Activated B cell treated with CpG ODN at 0.5 μM for 24 hours (primary cell): ENCODE measurements at regions of chr3 and their contacts with region 1.

Region 1: DNA sequence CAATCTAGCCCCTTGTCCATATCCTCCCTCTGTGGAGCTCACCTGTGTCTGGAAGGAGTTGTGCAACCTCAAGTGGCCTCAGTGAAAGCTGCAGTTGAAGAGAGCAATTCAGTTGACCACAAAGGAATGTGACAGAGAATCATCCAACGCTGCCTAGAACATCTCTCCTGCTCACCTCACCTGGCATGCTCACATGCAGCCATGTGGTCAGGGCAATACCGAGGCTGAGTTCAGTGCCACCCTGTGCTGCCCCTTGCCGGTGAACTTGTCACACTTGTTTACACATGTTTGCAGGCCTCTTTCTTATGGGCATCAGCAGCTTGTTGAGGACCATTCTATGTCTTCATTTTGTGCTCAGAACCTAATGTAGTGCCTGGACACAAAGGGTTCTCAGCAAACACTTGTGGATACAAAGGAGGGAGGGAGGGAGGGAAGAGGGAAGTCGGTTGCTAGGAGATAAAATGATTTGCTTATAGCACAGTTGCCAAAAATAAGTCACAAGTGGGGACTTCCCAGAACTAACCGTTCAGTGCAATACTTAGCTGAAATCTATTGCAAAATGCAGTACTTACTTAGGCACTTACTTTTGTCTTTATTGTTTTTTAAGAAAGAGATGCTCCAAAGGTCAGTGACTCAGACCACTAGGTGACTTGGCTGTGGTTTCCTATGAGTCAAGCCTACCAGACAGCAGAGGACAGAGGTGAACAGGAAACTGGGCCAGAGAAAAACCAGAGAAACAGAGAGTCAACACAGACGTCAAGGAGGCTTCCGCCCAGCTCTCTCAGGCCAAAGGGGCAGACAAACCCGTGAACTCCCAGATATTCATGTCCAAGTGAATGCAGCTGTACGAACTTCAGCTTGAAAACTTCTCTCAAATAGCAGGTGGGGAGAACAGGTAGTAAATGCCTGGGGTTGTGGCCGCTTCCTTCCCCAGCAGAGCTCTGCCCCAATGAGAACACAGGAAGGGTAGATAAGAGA is 227.8 kb upstream of the CTNNB1 start:
- DNase-seq: peak; percentile 38
- ATAC-seq: peak; percentile 80
- H3K4me3 Mint-ChIP-seq: peak overlapping the region; percentile 60
- H3K27ac Mint-ChIP-seq: peak overlapping the region; percentile 98
- H3K4me1 Mint-ChIP-seq: peaks cover 78% of the 10 kb centered on the region
- H3K27me3 Mint-ChIP-seq: no peaks in the 10 kb centered on the region
- CTCF ChIP-seq: no peak

Region 2: DNA sequence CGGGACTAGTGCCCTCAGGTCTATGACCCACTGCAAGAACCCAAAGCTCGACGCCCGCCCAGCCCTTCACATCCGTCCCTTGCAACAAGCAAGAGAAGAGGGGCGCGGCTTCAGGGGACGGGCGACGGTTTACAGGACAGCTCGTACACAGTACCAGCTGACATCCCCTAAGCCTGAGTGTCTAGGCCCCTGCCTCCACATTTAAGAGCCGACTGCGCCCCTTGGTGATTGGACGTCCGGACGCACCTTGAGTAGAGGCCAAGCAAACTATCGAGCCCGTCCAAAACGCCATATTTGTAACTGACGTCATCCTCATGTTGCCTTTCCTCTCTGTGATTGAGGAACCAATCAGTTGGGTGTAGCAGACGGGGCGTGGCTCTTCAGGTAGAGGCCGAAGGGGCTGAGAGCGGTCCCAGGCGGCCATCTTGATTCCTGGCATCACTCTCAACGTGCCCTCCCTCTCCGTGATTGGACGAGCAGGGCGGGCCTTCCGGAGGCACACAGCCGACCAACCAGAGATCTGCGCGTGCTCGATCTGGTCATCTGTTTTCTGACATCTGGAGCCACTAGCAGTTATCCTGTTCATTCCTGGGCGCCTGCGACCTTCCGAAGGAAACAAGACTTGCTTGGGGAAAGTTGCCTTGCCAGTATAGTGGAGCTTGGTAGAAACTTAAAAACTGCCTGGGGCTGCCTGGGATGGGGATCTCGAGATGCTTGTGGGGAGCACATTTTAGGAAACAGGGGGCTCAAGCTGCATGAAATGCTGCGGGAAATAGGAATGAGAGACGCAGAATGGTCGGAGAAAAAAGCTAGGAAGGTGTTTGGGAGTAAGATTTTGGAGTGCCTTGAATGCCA is 518.4 kb before region 1 on chr3:
- CTCF ChIA-PET with region 1: no interaction called
- POLR2A ChIA-PET with region 1: no interaction called
- intact Hi-C with region 1: loop called (anchors 5 kb)
- DNase-seq: peak; percentile 81
- ATAC-seq: peak; percentile 92
- H3K4me3 Mint-ChIP-seq: peak overlapping the region; percentile 96
- H3K27ac Mint-ChIP-seq: peak overlapping the region; percentile 98
- H3K4me1 Mint-ChIP-seq: peaks cover 36% of the 10 kb centered on the region
- H3K27me3 Mint-ChIP-seq: no peaks in the 10 kb centered on the region
- CTCF ChIP-seq: no peak

Region 3: GRCh38 chr3:40713795-40714194 is 257.7 kb before region 1 on chr3:
- CTCF ChIA-PET with region 1: interaction called, 3 read pairs
- POLR2A ChIA-PET with region 1: no interaction called
- intact Hi-C with region 1: loop called (anchors 1 kb)
- DNase-seq: no peak
- ATAC-seq: peak; percentile 59
- H3K4me3 Mint-ChIP-seq: peak overlapping the region; percentile 57
- H3K27ac Mint-ChIP-seq: peak overlapping the region; percentile 59
- H3K4me1 Mint-ChIP-seq: peaks cover 54% of the 10 kb centered on the region
- H3K27me3 Mint-ChIP-seq: no peaks in the 10 kb centered on the region
- CTCF ChIP-seq: no peak

Region 4: GRCh38 chr3:40782111-40782721 is 189.3 kb before region 1 on chr3:
- CTCF ChIA-PET with region 1: interaction called, 4 read pairs
- POLR2A ChIA-PET with region 1: interaction called, 3 read pairs
- intact Hi-C with region 1: loop called (anchors 1 kb)
- DNase-seq: no peak
- ATAC-seq: no peak
- H3K4me3 Mint-ChIP-seq: no peak overlapping the region
- H3K27ac Mint-ChIP-seq: no peak overlapping the region
- H3K4me1 Mint-ChIP-seq: no peaks in the 10 kb centered on the region
- H3K27me3 Mint-ChIP-seq: peaks cover 5% of the 10 kb centered on the region
- CTCF ChIP-seq: no peak